ENCODE measurements at regions of chr1 and their contacts with region 1.

Region 1: GRCh38 chr1:119647734-119648619 is at the start of gene ZNF697:
- DNase-seq: peak; percentile 98
- ATAC-seq: peak; percentile 85
- H3K4me3 ChIP-seq: peak within 1 kb of the TSS; percentile 78
- H3K27ac ChIP-seq: peak within 1 kb of the TSS; percentile 91
- H3K4me1 ChIP-seq: peaks cover 11% of the 10 kb centered on the region
- H3K27me3 ChIP-seq: no peaks in the 10 kb centered on the region
- CTCF ChIP-seq: peak; percentile 53
- POLR2A ChIP-seq: peak; percentile 88
- RAD21 ChIP-seq: peak; percentile 41
- total RNA-seq, gene ZNF697: 10.2 and 14.4 TPM in 2 replicates

Region 2: DNA sequence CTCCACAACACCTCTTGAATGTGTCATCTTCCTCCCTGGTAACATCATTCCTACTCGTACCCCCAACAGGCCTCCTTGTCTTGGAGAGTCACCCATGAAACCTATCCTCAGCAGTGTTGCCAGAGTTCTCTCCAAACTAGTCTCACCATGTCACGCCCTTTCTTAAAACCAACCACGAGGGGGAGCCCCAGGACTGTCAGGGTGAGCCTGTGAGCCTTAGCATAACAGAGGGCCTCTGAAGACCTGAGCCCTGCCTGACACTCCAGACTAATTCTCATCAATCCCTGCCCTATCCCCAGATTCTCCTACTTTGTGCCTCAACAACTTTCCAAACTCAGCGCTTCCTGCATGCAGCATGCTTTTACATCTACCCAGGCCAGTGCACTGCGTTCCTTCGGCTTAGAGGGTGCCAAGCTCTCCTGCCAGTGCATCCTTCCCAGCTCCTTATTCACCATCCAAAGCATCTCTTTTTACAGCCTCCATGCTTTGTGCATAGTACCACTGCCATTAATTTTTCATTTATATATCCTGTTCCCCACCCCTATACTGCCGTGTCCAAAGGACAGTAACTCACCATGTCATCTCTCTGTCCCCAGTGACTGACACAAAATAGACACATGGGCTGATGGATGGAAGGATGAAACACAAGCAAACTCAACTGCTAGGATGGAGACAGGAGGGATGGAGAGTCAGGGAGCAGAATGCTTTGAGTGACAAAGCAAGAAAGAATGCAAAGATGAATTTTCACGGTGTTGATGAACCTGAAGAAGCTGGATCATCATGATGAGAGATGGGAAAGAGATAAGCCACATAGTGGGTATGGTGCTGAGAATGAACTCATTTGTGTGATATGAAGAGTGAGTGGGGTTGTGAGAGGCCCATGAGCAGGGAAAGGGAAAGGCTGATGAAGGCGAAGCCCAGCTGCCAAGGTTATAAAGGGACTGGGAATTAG is 33.9 kb before region 1 on chr1:
- CTCF ChIA-PET with region 1: interaction called, 5 read pairs
- POLR2A ChIA-PET with region 1: no interaction called
- dilution Hi-C with region 1: no loop called
- in situ Hi-C with region 1: no loop called
- intact Hi-C with region 1: loop called (anchors 1 kb)
- DNase-seq: peak; percentile 83
- ATAC-seq: peak; percentile 92
- H3K4me3 ChIP-seq: no peak overlapping the region
- H3K27ac ChIP-seq: no peak overlapping the region
- H3K4me1 ChIP-seq: peaks cover 2% of the 10 kb centered on the region; the same call in 1 of the 2 replicates
- H3K27me3 ChIP-seq: peaks cover 3% of the 10 kb centered on the region; the same call in 1 of the 2 replicates
- CTCF ChIP-seq: peak; percentile 88
- POLR2A ChIP-seq: no peak
- RAD21 ChIP-seq: peak; percentile 93

Region 3: DNA sequence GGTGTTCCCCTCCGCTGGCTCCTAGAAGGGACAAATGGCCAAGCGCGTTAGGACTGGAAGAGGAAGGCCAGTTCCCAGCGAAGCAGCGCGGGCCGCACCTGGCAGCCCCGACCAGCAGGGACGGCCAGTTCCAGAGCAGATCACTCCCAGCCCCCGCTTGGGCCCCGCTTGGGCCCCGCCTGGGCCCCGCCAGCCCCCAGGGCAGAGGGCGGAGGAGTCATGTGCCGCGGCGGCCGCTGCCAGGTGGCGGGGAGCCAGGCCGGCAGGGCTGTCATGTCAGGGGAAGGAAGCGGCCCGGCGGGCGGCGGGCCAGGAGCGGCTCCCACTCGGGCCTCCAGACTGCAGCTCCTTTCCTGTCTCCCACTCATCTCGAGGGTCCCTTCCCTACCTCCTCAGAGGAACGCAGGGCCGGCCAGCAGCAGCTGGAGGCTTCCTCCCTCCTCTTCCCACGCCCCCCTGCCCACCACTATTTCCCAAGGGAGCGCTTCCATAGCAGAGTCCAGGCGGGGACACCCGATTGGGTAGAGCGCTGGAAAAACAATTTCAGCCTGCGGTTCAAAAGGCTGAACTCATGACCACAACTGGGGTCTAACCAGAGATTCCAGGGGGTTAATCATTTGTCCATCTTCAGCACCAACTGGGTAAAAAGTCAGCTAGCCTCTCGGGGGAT is 16.4 kb before region 1 on chr1:
- CTCF ChIA-PET with region 1: interaction called, 8 read pairs
- POLR2A ChIA-PET with region 1: no interaction called
- dilution Hi-C with region 1: no loop called
- in situ Hi-C with region 1: no loop called
- intact Hi-C with region 1: loop called (anchors 2 kb)
- DNase-seq: peak; percentile 72
- ATAC-seq: peak; percentile 77
- H3K4me3 ChIP-seq: no peak overlapping the region
- H3K27ac ChIP-seq: peak overlapping the region; percentile 48; the same call in 1 of the 2 replicates
- H3K4me1 ChIP-seq: peaks cover 32% of the 10 kb centered on the region
- H3K27me3 ChIP-seq: no peaks in the 10 kb centered on the region
- CTCF ChIP-seq: no peak
- POLR2A ChIP-seq: no peak
- RAD21 ChIP-seq: no peak

Region 4: DNA sequence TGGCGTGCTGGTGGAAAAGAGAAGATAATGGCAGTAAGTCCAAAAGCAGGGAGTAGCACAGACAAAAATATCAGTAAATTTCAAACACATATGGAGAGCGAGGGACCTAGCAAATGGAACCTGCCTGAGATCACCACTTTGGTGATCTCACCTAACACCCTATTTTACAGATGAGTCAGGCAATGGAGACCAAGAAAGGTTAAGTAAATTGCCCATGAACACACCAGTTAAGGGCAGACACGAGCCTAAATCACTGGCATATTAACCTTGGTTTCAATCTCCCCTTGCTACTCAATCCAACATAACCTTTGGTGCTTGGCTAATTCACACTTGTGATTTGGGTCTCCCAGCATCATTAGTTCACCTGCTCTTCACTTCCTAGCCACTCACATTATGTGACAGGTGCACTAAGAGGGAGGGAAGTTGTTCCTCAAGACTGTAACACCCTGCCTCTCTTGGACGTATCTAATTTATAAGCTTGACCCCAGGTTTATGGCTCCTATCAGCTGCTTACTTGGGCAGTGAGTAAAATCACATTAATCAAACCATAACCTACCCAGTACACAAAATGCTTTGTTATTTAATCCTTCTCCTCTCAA is 11.4 kb before region 1 on chr1:
- CTCF ChIA-PET with region 1: interaction called, 4 read pairs
- POLR2A ChIA-PET with region 1: no interaction called
- dilution Hi-C with region 1: no loop called
- in situ Hi-C with region 1: no loop called
- intact Hi-C with region 1: loop called (anchors 1 kb)
- DNase-seq: no peak
- ATAC-seq: no peak
- H3K4me3 ChIP-seq: no peak overlapping the region
- H3K27ac ChIP-seq: no peak overlapping the region
- H3K4me1 ChIP-seq: peaks cover 42% of the 10 kb centered on the region
- H3K27me3 ChIP-seq: no peaks in the 10 kb centered on the region
- CTCF ChIP-seq: no peak
- POLR2A ChIP-seq: no peak
- RAD21 ChIP-seq: no peak

Region 5: GRCh38 chr1:119662034-119662437 is 14.1 kb after region 1 on chr1:
- CTCF ChIA-PET with region 1: interaction called, 6 read pairs
- POLR2A ChIA-PET with region 1: no interaction called
- dilution Hi-C with region 1: no loop called
- in situ Hi-C with region 1: no loop called
- intact Hi-C with region 1: loop called (anchors 2 kb)
- DNase-seq: no peak
- ATAC-seq: no peak
- H3K4me3 ChIP-seq: no peak overlapping the region
- H3K27ac ChIP-seq: no peak overlapping the region
- H3K4me1 ChIP-seq: peaks cover 2% of the 10 kb centered on the region; the same call in 1 of the 2 replicates
- H3K27me3 ChIP-seq: peaks cover 11% of the 10 kb centered on the region
- CTCF ChIP-seq: no peak
- POLR2A ChIP-seq: no peak
- RAD21 ChIP-seq: no peak

Region 6: GRCh38 chr1:119711804-119712341 is 63.9 kb after region 1 on chr1 and contains the start of gene PHGDH:
- CTCF ChIA-PET with region 1: no interaction called
- POLR2A ChIA-PET with region 1: no interaction called
- dilution Hi-C with region 1: no loop called
- in situ Hi-C with region 1: no loop called
- intact Hi-C with region 1: loop called (anchors 5 kb)
- DNase-seq: peak; percentile 90
- ATAC-seq: peak; percentile 79
- H3K4me3 ChIP-seq: peak within 1 kb of the TSS; percentile 78
- H3K27ac ChIP-seq: peak within 1 kb of the TSS; percentile 84
- H3K4me1 ChIP-seq: peaks cover 19% of the 10 kb centered on the region
- H3K27me3 ChIP-seq: peaks cover 11% of the 10 kb centered on the region
- CTCF ChIP-seq: no peak
- POLR2A ChIP-seq: peak; percentile 87
- RAD21 ChIP-seq: no peak
- total RNA-seq, gene PHGDH: 162 and 331 TPM in 2 replicates

Region 7: GRCh38 chr1:120176092-120176855 is 528.3 kb after region 1 on chr1 and contains the start of gene SEC22B:
- CTCF ChIA-PET with region 1: no interaction called
- POLR2A ChIA-PET with region 1: no interaction called
- dilution Hi-C with region 1: no loop called
- in situ Hi-C with region 1: no loop called
- intact Hi-C with region 1: no loop called
- DNase-seq: peak; percentile 96
- ATAC-seq: peak; percentile 60
- H3K4me3 ChIP-seq: peak within 1 kb of the TSS; percentile 90
- H3K27ac ChIP-seq: peak within 1 kb of the TSS; percentile 96
- H3K4me1 ChIP-seq: peaks cover 12% of the 10 kb centered on the region
- H3K27me3 ChIP-seq: no peaks in the 10 kb centered on the region
- CTCF ChIP-seq: no peak
- POLR2A ChIP-seq: peak; percentile 97
- RAD21 ChIP-seq: peak; percentile 26
- total RNA-seq, gene SEC22B: 57.4 and 78.9 TPM in 2 replicates